Activated naive CD4-positive, alpha-beta T cell treated with anti-CD3 and anti-CD28 coated beads, Interleukin-2, amount 10 ng/mL, durations not matched to agents 7 days and 5 days (primary cell): ENCODE measurements at regions of chr2 and their contacts with region 1.

Region 1: DNA sequence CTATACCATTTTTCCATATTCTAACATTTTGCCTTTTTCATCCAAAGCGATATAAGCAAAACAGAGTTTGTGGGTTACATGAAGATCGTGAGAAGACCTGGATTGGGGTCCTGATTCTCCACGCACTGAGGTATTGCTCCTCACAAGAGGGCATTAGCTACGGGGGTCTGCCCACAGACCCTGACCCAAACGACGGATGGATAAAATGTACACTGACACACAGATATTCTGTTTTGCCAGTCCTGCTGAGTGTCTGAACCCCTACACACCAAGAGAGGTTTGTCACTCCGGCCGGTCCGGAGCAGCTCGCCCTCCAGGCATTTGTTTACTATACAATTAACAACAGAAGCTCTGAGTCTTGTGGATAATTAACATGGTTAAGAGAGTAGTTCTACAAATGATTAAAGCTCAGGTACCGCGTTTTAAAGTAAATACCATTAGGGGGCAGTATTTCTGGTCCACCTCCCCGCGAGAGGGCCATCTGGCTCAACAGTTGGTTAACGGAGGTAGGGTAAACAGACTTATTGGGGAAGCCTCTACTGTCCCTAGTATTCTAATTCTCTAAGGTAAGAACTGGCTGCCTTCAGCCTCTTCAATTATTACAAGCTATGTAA is 28.4 kb downstream of the SCYGR8 start:
- DNase-seq: no peak
- H3K4me3 Mint-ChIP-seq: no peak overlapping the region
- H3K27ac Mint-ChIP-seq: no peak overlapping the region
- H3K4me1 Mint-ChIP-seq: peaks cover 2% of the 10 kb centered on the region
- H3K27me3 Mint-ChIP-seq: no peaks in the 10 kb centered on the region

Region 2: DNA sequence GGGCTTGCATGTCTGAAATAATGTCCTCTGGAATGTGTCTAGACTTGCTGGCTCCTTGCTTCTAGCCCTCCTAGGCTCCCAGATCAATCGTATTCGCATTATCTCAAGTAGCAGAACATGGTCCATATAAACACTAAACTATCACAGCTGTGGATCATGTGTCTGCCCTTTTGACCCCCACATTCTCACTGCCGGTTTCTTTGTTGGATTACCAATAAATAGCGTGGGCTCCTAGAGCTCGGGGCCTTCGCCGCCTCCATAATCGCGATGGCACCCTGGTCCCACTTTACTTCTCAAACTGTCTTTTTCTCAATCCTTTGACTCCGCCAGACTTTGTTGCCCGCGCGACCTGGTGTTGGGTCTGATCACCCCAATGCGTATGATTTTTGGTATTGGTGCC is 34.8 kb before region 1 on chr2:
- CTCF ChIA-PET with region 1: no interaction called
- DNase-seq: no peak
- H3K4me3 Mint-ChIP-seq: no peak overlapping the region
- H3K27ac Mint-ChIP-seq: no peak overlapping the region
- H3K4me1 Mint-ChIP-seq: no peaks in the 10 kb centered on the region
- H3K27me3 Mint-ChIP-seq: peaks cover 10% of the 10 kb centered on the region

Region 3: DNA sequence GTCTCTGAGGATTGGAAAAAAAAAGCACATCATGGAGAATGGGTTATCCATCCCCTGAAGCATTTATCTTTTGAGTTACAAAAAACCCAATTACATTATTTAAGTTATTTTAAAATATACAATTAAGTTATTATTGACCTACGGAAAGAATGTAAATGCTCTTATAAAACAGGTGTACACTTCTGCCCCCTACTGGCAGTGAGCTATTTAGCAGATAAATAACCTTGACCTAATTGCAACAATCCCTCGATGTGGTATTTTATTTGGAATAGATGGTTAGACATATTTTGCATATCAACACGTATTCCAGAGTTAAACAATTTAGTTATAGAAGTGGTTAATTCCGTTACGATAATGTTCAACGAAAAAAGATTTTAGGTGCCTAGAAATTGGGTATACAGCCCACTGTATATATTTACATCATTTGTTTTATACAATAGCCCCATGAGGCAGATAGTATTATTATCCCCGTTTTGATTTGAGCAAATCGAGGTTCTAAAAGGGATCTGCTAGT is 88.2 kb after region 1 on chr2:
- CTCF ChIA-PET with region 1: interaction called, 23 read pairs
- DNase-seq: peak; percentile 31
- H3K4me3 Mint-ChIP-seq: no peak overlapping the region
- H3K27ac Mint-ChIP-seq: no peak overlapping the region
- H3K4me1 Mint-ChIP-seq: no peaks in the 10 kb centered on the region
- H3K27me3 Mint-ChIP-seq: peaks cover 5% of the 10 kb centered on the region